Activated CD4-positive, alpha-beta T cell treated with anti-CD3 and anti-CD28 coated beads, Interleukin-2, amount 10 ng/mL, durations not matched to agents 7 days and 5 days (primary cell): ENCODE measurements at regions of chr17 and their contacts with region 1.

Region 1: DNA sequence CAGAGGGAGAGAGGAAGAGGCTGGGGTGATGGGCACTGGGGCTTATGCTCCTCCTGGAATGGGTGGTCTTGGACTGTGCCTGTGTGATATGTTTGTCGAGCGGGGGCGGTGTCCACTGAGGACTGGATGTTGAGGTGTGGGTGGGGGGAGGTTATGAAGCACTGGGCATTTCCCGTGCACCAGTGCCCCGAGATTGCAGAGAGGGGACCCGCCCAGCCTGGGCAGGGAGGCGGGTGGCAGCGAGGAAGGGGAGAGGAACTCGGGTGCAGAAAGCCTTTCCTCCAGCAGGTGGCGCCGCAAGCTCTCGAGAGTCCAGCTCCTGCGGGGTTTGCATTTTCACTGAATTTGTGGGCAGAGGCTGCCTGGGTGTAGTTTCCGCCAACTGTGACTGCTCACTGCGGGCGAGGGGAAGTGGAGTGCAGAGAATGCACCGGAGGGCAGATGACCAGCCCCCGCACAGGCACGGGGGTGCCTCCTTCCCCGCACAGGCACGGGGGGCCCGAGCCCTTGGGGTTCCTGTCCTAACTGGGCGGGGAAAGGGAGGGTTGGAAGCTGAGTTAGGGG is 190.6 kb downstream of the SEC14L1 start:
- DNase-seq: peak; percentile 97
- H3K4me3 Mint-ChIP-seq: peak overlapping the region; percentile 68
- H3K27ac Mint-ChIP-seq: peak overlapping the region; percentile 92
- H3K4me1 Mint-ChIP-seq: peaks cover 64% of the 10 kb centered on the region
- H3K27me3 Mint-ChIP-seq: no peaks in the 10 kb centered on the region

Region 2: GRCh38 chr17:77304051-77304745 is 27.2 kb before region 1 on chr17:
- CTCF ChIA-PET with region 1: no interaction called
- POLR2A ChIA-PET with region 1: no interaction called
- DNase-seq: no peak
- H3K4me3 Mint-ChIP-seq: no peak overlapping the region
- H3K27ac Mint-ChIP-seq: no peak overlapping the region
- H3K4me1 Mint-ChIP-seq: no peaks in the 10 kb centered on the region
- H3K27me3 Mint-ChIP-seq: no peaks in the 10 kb centered on the region

Region 3: DNA sequence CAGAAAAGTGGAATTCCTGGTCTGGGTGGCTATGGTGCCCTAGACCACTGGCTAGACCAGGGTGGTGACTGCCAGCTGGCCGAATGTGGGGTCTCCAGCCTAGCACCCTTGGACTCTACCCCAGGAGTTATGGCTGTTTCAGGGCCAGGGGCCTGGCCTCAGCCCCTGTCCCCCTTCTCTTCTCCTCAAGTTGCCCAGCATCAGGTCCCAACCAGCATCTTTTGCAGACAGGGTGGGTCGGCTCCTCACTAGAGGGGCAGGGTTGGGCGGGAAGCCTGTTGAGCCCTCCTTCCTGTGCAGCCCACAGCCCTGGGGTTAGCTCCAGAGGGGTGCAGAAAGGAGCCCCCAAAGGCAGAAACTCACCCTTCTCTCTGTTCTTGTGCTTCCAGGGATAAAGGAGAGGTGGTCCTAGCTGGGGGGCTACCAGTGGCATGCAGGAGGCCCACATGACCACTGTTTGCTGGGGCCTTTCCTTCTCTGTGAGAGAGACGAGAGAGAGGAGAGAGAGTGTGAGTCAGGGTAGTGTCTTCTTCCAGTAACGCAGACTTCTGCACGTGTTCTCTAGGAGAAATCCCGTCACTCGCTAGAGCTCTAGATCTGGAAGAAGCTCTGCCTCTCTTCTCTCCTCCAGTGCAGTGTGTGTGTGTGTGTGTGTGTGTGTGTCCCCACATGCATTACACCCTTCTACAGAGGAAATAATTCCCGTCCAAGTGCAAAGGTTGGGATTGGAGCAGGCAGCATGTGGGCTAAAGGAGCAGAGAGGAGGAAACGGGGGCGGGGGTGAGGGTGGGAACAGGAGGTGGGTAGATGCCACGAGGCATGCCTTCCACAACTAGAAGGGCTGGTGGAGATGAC is 18.8 kb after region 1 on chr17:
- CTCF ChIA-PET with region 1: interaction called, 13 read pairs
- POLR2A ChIA-PET with region 1: no interaction called
- DNase-seq: no peak
- H3K4me3 Mint-ChIP-seq: no peak overlapping the region
- H3K27ac Mint-ChIP-seq: peak overlapping the region; percentile 31
- H3K4me1 Mint-ChIP-seq: peaks cover 36% of the 10 kb centered on the region
- H3K27me3 Mint-ChIP-seq: no peaks in the 10 kb centered on the region

Region 4: DNA sequence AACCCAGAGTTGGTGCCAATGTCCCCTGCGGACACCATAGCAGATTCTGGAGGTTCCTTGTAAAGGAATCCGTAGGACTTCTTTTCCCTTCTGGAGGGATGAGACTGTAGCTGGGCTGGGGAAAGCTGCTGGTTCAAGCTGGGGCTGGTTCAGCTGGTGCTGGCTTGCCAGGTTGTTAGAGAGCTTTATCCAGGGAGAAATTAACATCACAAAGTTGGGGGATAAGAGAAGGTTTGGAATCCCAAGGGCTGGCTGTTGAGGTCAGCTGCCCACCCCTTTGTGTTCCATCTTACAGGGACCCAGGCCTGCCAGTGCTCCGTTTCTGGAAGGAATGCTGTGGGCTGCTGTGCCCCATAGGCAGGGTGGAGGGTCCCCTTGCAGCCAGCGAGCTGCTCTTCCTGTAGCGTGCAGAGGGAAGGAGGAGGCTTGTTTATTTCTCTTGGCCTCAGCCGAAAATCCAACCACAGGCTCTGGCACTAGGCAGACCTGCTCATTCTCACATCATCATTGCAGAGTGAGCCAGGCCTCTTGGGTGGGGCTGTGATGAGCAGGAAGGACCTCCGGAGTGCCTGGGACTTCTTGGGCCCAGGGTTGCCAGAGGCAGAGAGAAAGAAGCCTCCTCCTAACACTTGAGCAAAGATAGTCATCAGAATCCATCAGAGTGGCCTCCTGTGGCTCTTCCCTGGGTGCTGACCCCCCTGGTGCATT is 60.4 kb after region 1 on chr17:
- CTCF ChIA-PET with region 1: interaction called, 16 read pairs
- POLR2A ChIA-PET with region 1: no interaction called
- DNase-seq: peak; percentile 67
- H3K4me3 Mint-ChIP-seq: peak overlapping the region; percentile 86
- H3K27ac Mint-ChIP-seq: peak overlapping the region; percentile 95
- H3K4me1 Mint-ChIP-seq: peaks cover 87% of the 10 kb centered on the region
- H3K27me3 Mint-ChIP-seq: no peaks in the 10 kb centered on the region

Region 5: DNA sequence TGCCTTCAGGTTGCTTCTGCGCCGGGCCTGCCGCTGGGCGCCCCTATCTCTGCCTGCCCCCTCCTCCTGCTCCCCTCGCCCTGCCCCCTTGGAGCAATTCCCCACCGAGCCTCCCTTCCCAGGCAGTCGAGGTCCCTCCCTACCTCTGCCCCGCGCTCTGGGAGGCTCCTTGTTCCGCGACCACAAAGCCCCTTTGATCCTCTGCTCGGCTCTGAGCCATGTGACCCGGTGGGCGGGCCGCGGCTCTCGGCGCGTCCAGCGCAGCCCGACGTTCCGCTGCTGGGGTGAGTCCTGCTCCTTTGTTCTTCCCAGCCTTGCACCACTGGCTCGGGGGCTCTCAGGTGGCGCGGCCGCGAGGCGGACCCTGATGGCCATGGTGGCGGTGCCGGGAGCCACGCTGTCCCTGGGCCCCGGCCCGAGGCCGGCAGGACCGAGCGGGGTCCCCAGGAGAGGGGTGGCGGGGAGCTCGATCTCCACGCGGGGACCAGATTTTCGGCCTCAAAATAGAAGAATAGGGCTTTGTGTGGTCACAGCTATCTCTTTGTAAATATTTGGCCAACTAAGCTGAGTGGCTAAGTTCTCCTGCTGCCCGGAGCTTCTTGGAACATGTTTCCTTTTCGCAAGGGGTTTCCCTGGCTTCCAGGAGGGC is 120.0 kb after region 1 on chr17:
- CTCF ChIA-PET with region 1: interaction called, 12 read pairs
- POLR2A ChIA-PET with region 1: no interaction called
- DNase-seq: peak; percentile 81
- H3K4me3 Mint-ChIP-seq: peak overlapping the region; percentile 95
- H3K27ac Mint-ChIP-seq: peak overlapping the region; percentile 98
- H3K4me1 Mint-ChIP-seq: peaks cover 56% of the 10 kb centered on the region
- H3K27me3 Mint-ChIP-seq: no peaks in the 10 kb centered on the region